HEK293T (cell line): ENCODE measurements at regions of chr19 and their contacts with region 1.

Region 1: DNA sequence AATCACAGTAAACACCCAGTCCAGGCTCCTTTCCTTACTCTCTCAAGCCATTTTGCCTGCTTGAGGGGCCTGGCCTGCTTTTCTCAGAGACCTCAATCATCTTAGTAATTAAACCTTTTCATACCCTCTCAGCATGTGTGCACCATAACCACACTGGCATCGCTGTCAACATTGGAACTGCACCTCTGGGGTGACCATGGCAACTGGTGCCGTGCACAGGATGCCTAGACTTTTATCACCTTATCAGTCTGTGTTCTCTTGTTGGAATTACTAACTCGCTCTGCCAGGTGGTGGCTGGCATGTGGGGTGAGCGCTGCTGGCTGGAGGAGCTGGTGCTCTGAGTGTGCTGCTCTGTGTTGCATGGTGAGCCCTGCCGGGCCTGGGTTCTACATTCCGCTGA is 17.5 kb upstream of the ZNF709 start:
- DNase-seq: no peak

Region 2: GRCh38 chr19:12513531-12514061 is 11.4 kb after region 1 on chr19:
- CTCF ChIA-PET with region 1: interaction called, 10 read pairs
- POLR2A ChIA-PET with region 1: no interaction called
- DNase-seq: no peak

Region 3: DNA sequence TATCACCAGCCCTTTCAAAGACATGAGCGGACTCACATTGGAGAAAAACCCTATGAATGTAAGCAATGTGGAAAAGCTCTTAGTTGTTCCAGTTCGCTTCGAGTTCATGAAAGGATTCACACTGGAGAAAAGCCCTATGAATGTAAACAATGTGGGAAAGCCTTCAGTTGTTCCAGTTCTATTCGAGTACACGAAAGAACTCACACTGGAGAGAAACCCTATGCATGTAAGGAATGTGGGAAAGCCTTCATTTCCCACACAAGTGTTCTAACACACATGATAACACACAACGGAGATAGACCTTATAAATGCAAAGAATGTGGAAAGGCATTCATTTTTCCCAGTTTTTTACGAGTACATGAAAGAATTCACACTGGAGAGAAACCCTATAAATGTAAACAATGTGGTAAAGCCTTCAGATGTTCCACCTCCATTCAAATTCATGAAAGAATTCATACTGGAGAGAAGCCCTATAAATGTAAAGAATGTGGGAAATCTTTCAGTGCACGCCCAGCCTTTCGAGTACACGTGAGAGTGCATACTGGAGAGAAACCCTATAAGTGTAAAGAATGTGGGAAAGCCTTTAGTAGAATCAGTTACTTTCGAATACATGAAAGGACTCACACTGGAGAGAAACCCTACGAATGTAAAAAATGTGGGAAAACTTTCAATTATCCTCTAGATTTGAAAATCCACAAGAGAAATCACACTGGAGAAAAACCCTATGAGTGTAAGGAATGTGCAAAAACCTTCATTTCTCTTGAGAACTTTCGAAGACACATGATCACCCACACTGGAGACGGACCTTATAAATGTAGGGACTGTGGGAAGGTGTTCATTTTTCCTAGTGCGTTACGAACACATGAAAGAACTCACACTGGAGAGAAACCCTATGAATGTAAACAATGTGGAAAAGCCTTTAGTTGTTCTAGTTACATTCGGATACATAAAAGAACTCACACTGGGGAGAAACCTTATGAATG is 126.2 kb after region 1 on chr19:
- CTCF ChIA-PET with region 1: no interaction called
- POLR2A ChIA-PET with region 1: no interaction called
- DNase-seq: no peak